Adrenal gland (tissue), 19 donors: ENCODE measurements at regions of chr19 and their contacts with region 1.

Region 1: GRCh38 chr19:4732680-4733114 is 9.1 kb upstream of the DPP9 start:
- DNase-seq: peak in 6 of 7 donors; percentile 59 to 77 (median 62)
- H3K4me3 ChIP-seq: no peak overlapping the region
- H3K27ac ChIP-seq: no peak overlapping the region
- H3K4me1 ChIP-seq: no peaks in the 10 kb centered on the region
- H3K27me3 ChIP-seq: no peaks in the 10 kb centered on the region
- CTCF ChIP-seq: peak; percentile 52 to 90 (median 73)
- POLR2A ChIP-seq: no peak

Region 2: GRCh38 chr19:4791170-4792018 is 58.7 kb after region 1 on chr19 and contains the start of gene FEM1A:
- intact Hi-C with region 1: loop called (anchors 5 kb)
- DNase-seq: peak; percentile 99 to 100 (median 100)
- H3K4me3 ChIP-seq: peak within 1 kb of the TSS; percentile 28 to 98 (median 82)
- H3K27ac ChIP-seq: peak within 1 kb of the TSS; percentile 85 to 97 (median 92)
- H3K4me1 ChIP-seq: peaks cover 12 to 43% of the 10 kb centered on the region in 2 donors
- H3K27me3 ChIP-seq: no peaks in the 10 kb centered on the region
- CTCF ChIP-seq: peak; percentile 95 to 100 (median 99)
- POLR2A ChIP-seq: peak; percentile 52 to 58
- total RNA-seq, gene FEM1A: 11.0 to 25.8 (median 17.8) TPM

Region 3: GRCh38 chr19:4803736-4804695 is 71.3 kb after region 1 on chr19:
- intact Hi-C with region 1: loop called (anchors 5 kb)
- DNase-seq: peak in 6 of 7 donors; percentile 44 to 72 (median 60)
- H3K4me3 ChIP-seq: no peak overlapping the region
- H3K27ac ChIP-seq: no peak overlapping the region
- H3K4me1 ChIP-seq: no peaks in the 10 kb centered on the region
- H3K27me3 ChIP-seq: no peaks in the 10 kb centered on the region
- CTCF ChIP-seq: peak; percentile 41 to 74 (median 67)
- POLR2A ChIP-seq: no peak

Region 4: DNA sequence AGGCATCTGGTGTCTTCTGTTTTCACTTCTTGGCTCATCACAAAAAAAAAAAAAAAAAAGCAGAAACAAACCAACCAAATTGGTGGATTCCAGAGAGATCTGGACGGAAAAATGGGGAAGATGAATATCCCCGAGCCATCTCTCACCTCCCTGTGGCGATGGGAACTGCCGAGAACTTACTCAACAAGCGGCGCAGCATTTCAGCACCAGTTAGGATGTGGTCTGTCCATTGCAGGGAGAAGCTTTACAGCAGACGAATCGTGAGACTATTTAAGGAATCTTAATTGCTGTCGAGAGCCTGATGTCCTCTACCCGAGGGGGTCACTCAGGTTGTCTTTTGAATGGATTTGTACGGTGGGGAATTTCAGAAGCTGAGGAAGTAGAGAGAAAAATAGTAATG is 219.0 kb after region 1 on chr19:
- intact Hi-C with region 1: no loop called
- DNase-seq: no peak
- H3K4me3 ChIP-seq: no peak overlapping the region
- H3K27ac ChIP-seq: no peak overlapping the region
- H3K4me1 ChIP-seq: no peaks in the 10 kb centered on the region
- H3K27me3 ChIP-seq: no peaks in the 10 kb centered on the region
- CTCF ChIP-seq: no peak
- POLR2A ChIP-seq: no peak